PC-3 (cell line): ENCODE measurements at regions of chr2 and their contacts with region 1.

Region 1: GRCh38 chr2:109613922-109614714 is at the starts of genes SEPTIN10 and SOWAHC:
- DNase-seq: peak; percentile 98
- ATAC-seq: peak; percentile 82
- H3K4me3 ChIP-seq: peak within 1 kb of the TSS; percentile 77
- H3K27ac ChIP-seq: peak within 1 kb of the TSS; percentile 43
- H3K4me1 ChIP-seq: peaks cover 49% of the 10 kb centered on the region
- H3K27me3 ChIP-seq: no peaks in the 10 kb centered on the region
- CTCF ChIP-seq: no peak
- total RNA-seq, gene SEPTIN10: 22.1 and 36.1 TPM in 2 replicates
- total RNA-seq, gene SOWAHC: 27.4 and 41.1 TPM in 2 replicates

Region 2: DNA sequence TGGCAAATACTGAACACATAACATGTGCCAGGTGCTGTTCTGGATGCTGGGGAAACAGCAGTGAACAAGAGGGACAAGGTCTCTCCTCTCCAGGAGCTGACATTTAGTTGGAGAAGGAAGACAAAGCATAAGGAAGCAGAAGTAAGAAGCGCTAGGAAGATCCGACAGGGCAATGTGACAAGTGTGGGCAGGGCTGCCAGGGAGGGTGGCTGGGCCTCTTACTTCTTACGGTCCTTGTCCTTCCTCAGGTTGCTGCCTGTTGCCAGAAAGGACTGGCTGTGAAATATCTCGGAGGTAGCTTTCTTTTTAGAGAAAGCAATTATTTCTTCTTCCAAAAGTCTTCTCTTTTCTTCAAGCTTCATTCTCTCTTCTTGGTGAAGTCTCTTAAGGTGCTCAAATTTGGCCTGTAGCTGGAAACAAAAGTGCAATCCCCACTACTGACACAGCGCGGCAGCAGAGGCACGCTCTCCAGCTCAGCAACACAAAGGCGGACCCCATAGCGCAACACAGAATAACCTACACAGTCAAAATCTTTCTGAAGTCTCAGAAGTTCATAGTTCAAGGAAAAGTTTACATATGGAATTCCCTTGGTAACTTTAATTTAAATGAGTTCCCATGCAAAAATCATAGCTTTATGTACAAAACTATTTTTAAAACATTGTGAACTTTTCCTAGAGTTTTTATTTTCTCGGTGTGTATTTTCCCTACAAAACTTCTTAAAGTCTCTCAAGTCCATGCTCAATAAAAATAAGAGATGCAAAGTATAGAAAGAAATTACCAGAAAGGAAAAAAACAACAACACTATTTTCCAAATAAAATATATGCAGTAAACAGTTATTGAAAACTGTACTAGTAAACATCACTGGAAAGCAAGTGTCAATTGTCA is 68.0 kb before region 1 on chr2:
- CTCF ChIA-PET with region 1: interaction called, 4 read pairs
- POLR2A ChIA-PET with region 1: interaction called, 7 read pairs
- intact Hi-C with region 1: loop called (anchors 1 kb)
- DNase-seq: peak; percentile 76
- ATAC-seq: peak; percentile 82
- H3K4me3 ChIP-seq: no peak overlapping the region
- H3K27ac ChIP-seq: no peak overlapping the region
- H3K4me1 ChIP-seq: no peaks in the 10 kb centered on the region
- H3K27me3 ChIP-seq: no peaks in the 10 kb centered on the region
- CTCF ChIP-seq: peak; percentile 92

Region 3: GRCh38 chr2:109558076-109558882 is 55.8 kb before region 1 on chr2:
- CTCF ChIA-PET with region 1: no interaction called
- POLR2A ChIA-PET with region 1: interaction called, 3 read pairs
- intact Hi-C with region 1: loop called (anchors 1 kb)
- DNase-seq: peak; percentile 97
- ATAC-seq: peak; percentile 79
- H3K4me3 ChIP-seq: no peak overlapping the region
- H3K27ac ChIP-seq: peak overlapping the region; percentile 94
- H3K4me1 ChIP-seq: peaks cover 64% of the 10 kb centered on the region
- H3K27me3 ChIP-seq: no peaks in the 10 kb centered on the region
- CTCF ChIP-seq: no peak

Region 4: GRCh38 chr2:109563980-109564550 is 50.1 kb before region 1 on chr2:
- CTCF ChIA-PET with region 1: no interaction called
- POLR2A ChIA-PET with region 1: interaction called, 3 read pairs
- intact Hi-C with region 1: loop called (anchors 1 kb)
- DNase-seq: peak; percentile 74
- ATAC-seq: peak; percentile 58
- H3K4me3 ChIP-seq: 0 out of 2 replicates have a peak overlapping the region, but pooled peaks have one; percentile 25
- H3K27ac ChIP-seq: peak overlapping the region; percentile 94
- H3K4me1 ChIP-seq: peaks cover 62% of the 10 kb centered on the region
- H3K27me3 ChIP-seq: no peaks in the 10 kb centered on the region
- CTCF ChIP-seq: no peak

Region 5: DNA sequence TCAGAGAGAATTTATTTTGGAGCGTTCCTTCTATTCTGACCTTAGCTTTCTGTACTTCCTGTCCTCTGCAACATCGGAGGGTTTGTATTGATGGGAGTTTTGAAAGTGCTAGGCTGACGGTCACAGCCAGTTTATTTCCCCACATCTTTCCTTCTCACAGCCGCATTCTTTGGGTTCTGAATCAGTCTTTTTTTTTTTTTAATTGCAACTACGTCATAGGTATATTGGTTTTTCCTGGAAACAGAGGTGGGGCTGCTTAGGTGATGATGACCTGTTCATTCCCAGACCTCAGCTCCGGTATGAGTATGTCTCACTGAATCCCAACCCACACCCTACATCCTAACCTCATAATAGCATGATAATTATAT is 88.5 kb after region 1 on chr2:
- CTCF ChIA-PET with region 1: no interaction called
- POLR2A ChIA-PET with region 1: interaction called, 4 read pairs
- intact Hi-C with region 1: loop called (anchors 5 kb)
- DNase-seq: peak; percentile 87
- ATAC-seq: peak; percentile 80
- H3K4me3 ChIP-seq: peak overlapping the region; percentile 38; the same call in 1 of the 2 replicates
- H3K27ac ChIP-seq: peak overlapping the region; percentile 95
- H3K4me1 ChIP-seq: peaks cover 46% of the 10 kb centered on the region
- H3K27me3 ChIP-seq: no peaks in the 10 kb centered on the region
- CTCF ChIP-seq: no peak